ENCODE measurements at regions of chr1 and their contacts with region 1.

Region 1: GRCh38 chr1:218388591-218388990 is 43.5 kb downstream of the TGFB2 start:
- DNase-seq: no peak
- H3K4me3 ChIP-seq: no peak overlapping the region
- H3K27ac ChIP-seq: no peak overlapping the region
- H3K4me1 ChIP-seq: peaks cover 0 to 5% of the 10 kb centered on the region in 2 donors
- H3K27me3 ChIP-seq: no peaks in the 10 kb centered on the region
- CTCF ChIP-seq: no peak

Region 2: GRCh38 chr1:218447010-218447689 is 58.6 kb after region 1 on chr1:
- intact Hi-C with region 1: loop called (anchors 5 kb)
- DNase-seq: peak in 1 of 2 donors; percentile 60
- H3K4me3 ChIP-seq: no peak overlapping the region
- H3K27ac ChIP-seq: peak overlapping the region; percentile 20 to 67
- H3K4me1 ChIP-seq: no peaks in the 10 kb centered on the region
- H3K27me3 ChIP-seq: no peaks in the 10 kb centered on the region
- CTCF ChIP-seq: no peak

Measured in ascending aorta (tissue), 2 donors.